Endothelial cell of umbilical vein (primary cell): ENCODE measurements at regions of chr10 and their contacts with region 1.

Region 1: GRCh38 chr10:119207367-119207668 is at the start of gene GRK5:
- DNase-seq: peak; percentile 95
- H3K4me3 ChIP-seq: peak within 1 kb of the TSS; percentile 68 to 90 (median 74)
- H3K27ac ChIP-seq: peak within 1 kb of the TSS; percentile 92
- H3K4me1 ChIP-seq: peaks cover 61% of the 10 kb centered on the region
- H3K27me3 ChIP-seq: no peaks in the 10 kb centered on the region
- CTCF ChIP-seq: no peak
- POLR2A ChIP-seq: no peak
- total RNA-seq, gene GRK5: 29.1 and 29.5 TPM in 2 replicates

Region 2: DNA sequence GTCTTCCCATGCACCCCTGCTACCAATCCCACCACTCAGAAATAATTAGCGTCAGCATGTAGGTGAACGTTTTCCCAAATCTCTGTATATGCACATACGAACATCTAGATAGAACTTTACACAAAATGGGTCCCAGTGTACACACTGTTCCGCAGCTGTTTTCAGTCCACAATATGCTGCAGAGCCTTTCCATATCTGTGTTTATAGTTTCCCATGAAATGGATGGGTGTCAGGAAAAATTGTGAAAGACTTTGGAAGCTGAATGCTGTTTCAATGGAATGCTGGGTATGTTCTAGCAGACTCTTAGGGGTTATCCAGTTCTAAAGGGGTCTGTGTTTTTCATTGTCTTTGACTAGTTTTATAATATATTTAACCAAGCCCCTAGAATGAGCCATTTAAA is 13.9 kb after region 1 on chr10:
- CTCF ChIA-PET with region 1: interaction called, 10 read pairs
- POLR2A ChIA-PET with region 1: no interaction called
- dilution Hi-C with region 1: no loop called
- intact Hi-C with region 1: no loop called
- DNase-seq: no peak
- H3K4me3 ChIP-seq: no peak overlapping the region
- H3K27ac ChIP-seq: no peak overlapping the region
- H3K4me1 ChIP-seq: no peaks in the 10 kb centered on the region
- H3K27me3 ChIP-seq: no peaks in the 10 kb centered on the region
- CTCF ChIP-seq: no peak
- POLR2A ChIP-seq: no peak

Region 3: GRCh38 chr10:119263951-119264621 is 56.8 kb after region 1 on chr10:
- CTCF ChIA-PET with region 1: interaction called, 11 read pairs
- POLR2A ChIA-PET with region 1: no interaction called
- dilution Hi-C with region 1: no loop called
- intact Hi-C with region 1: no loop called
- DNase-seq: peak; percentile 63
- H3K4me3 ChIP-seq: no peak overlapping the region
- H3K27ac ChIP-seq: no peak overlapping the region
- H3K4me1 ChIP-seq: peaks cover 14% of the 10 kb centered on the region
- H3K27me3 ChIP-seq: no peaks in the 10 kb centered on the region
- CTCF ChIP-seq: no peak
- POLR2A ChIP-seq: no peak

Region 4: GRCh38 chr10:119320981-119321380 is 113.7 kb after region 1 on chr10:
- CTCF ChIA-PET with region 1: interaction called, 10 read pairs
- POLR2A ChIA-PET with region 1: no interaction called
- dilution Hi-C with region 1: no loop called
- intact Hi-C with region 1: no loop called
- DNase-seq: peak; percentile 28
- H3K4me3 ChIP-seq: no peak overlapping the region
- H3K27ac ChIP-seq: no peak overlapping the region
- H3K4me1 ChIP-seq: peaks cover 23% of the 10 kb centered on the region
- H3K27me3 ChIP-seq: no peaks in the 10 kb centered on the region
- CTCF ChIP-seq: no peak
- POLR2A ChIP-seq: no peak

Region 5: DNA sequence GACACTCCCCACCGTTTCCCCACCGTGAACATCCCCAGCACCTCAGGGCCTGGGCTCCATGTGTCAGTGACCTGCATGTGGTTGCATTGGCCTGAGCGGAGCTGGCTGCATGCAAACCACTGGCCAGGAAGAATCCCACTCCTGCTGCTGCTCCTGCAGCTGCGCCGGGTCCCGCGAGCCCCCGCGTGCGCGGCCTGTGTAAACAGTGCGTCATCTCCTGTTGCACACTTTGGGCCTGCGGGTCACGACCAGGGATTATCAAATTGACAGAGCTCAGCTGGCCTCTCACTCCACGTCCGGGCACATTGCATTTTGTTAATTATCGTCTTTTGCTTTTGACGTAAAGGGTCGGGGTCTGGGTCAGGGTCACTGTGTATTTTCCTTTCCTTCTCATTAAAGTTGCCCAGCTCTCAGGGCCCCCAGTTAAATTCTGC is 202.6 kb after region 1 on chr10:
- CTCF ChIA-PET with region 1: interaction called, 29 read pairs
- POLR2A ChIA-PET with region 1: interaction called, 7 read pairs
- dilution Hi-C with region 1: no loop called
- intact Hi-C with region 1: no loop called
- DNase-seq: peak; percentile 94
- H3K4me3 ChIP-seq: no peak overlapping the region
- H3K27ac ChIP-seq: peak overlapping the region; percentile 85
- H3K4me1 ChIP-seq: peaks cover 44% of the 10 kb centered on the region
- H3K27me3 ChIP-seq: no peaks in the 10 kb centered on the region
- CTCF ChIP-seq: no peak
- POLR2A ChIP-seq: peak; percentile 66

Region 6: GRCh38 chr10:119494236-119495060 is 287.1 kb after region 1 on chr10:
- CTCF ChIA-PET with region 1: interaction called, 22 read pairs
- POLR2A ChIA-PET with region 1: no interaction called
- dilution Hi-C with region 1: no loop called
- intact Hi-C with region 1: no loop called
- DNase-seq: no peak
- H3K4me3 ChIP-seq: no peak overlapping the region
- H3K27ac ChIP-seq: no peak overlapping the region
- H3K4me1 ChIP-seq: no peaks in the 10 kb centered on the region
- H3K27me3 ChIP-seq: no peaks in the 10 kb centered on the region
- CTCF ChIP-seq: no peak
- POLR2A ChIP-seq: no peak